ENCODE measurements at regions of chr22 and their contacts with region 1.

Region 1: DNA sequence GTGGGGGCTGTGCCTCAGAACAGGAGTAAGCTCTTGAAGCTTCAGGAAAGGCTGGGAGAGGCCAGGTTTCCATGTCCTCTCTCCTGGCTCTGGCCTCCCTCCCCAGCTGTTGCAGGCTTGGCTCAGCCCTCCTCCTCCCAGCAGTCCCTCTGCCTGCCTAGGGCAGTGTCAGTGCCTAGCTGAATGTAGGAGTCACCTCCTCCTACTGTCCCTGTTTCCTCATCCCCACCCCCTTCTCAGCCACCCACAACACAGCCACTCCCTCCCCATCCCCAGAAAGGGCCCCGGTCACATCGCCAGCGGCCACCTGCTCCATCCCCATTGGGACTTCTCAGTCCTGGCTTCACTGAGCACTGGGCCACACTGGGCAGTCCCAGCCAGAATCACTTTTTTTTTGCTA is 2.9 kb upstream of the FBLN1 start:
- DNase-seq: peak; percentile 84
- ATAC-seq: peak; percentile 77

Region 2: GRCh38 chr22:45309472-45310227 is 190.1 kb before region 1 on chr22 and contains the start of gene FAM118A:
- intact Hi-C with region 1: no loop called
- DNase-seq: peak; percentile 96
- ATAC-seq: peak; percentile 95
- total RNA-seq, gene FAM118A: 18.7 TPM

Region 3: GRCh38 chr22:45462034-45462690 is 37.6 kb before region 1 on chr22:
- intact Hi-C with region 1: loop called (anchors 5 kb)
- DNase-seq: no peak
- ATAC-seq: no peak

Region 4: GRCh38 chr22:45475063-45475747 is 24.5 kb before region 1 on chr22:
- intact Hi-C with region 1: loop called (anchors 2 kb)
- DNase-seq: no peak
- ATAC-seq: no peak

Measured in Right ventricle myocardium inferior (tissue), 1 donor.